GM10248 (cell line): ENCODE measurements at regions of chr3 and their contacts with region 1.

Region 1: GRCh38 chr3:171829841-171830517 is 13.2 kb upstream of the TMEM212 start:
- DNase-seq: peak; percentile 37
- CTCF ChIP-seq: peak; percentile 70

Region 2: GRCh38 chr3:171646357-171647133 is 183.4 kb before region 1 on chr3:
- CTCF ChIA-PET with region 1: interaction called, 15 read pairs
- POLR2A ChIA-PET with region 1: no interaction called
- DNase-seq: peak; percentile 52
- CTCF ChIP-seq: peak; percentile 56

Region 3: DNA sequence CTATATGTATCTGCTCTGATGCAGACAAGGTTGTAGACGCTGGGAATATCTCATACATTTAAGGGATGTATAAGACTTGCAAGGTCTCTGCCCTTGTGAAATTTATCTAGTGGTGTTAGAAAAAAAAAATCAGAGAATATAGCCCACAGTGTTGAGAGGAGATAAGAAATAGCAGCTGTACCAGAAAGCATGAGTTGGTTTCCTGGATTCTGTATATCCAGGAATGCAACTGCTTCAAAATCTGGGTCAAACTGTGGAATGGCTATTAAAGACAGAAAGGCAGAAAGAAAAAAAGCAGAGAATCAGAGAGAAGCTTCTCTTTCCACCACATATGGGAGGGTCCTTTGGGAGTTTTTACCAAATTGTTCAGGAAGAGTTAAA is 11.6 kb after region 1 on chr3:
- CTCF ChIA-PET with region 1: interaction called, 20 read pairs
- POLR2A ChIA-PET with region 1: interaction called, 6 read pairs
- DNase-seq: no peak
- CTCF ChIP-seq: no peak

Region 4: DNA sequence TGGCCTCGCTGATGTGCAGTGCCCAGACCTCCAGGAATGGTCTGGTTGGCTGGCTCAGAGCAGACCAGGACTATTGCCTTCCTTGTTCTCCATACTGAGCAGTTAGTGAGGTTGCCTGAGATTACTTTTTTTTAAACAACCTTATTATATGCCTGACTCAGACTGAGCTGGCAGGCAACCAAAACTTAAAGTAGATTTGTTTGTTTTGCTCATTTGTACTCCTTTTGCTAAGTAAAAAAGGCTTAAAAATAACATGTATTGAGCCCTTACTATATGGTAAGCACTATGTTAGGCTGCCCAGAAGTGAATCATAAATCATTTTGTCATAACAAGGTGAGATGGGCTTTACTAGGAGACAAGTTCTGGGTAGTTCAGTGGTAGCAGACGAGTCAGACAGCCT is 525.9 kb after region 1 on chr3:
- CTCF ChIA-PET with region 1: no interaction called
- POLR2A ChIA-PET with region 1: no interaction called
- DNase-seq: no peak
- CTCF ChIP-seq: no peak